AG04450 (cell line): ENCODE measurements at regions of chr12 and their contacts with region 1.

Region 1: GRCh38 chr12:83826112-83826511 is 1086.5 kb downstream of the SLC6A15 start:
- DNase-seq: no peak
- H3K4me3 ChIP-seq: no peak overlapping the region
- H3K27ac ChIP-seq: no peak overlapping the region
- H3K27me3 ChIP-seq: no peaks in the 10 kb centered on the region
- CTCF ChIP-seq: peak; percentile 77

Region 2: GRCh38 chr12:83796527-83796926 is 29.6 kb before region 1 on chr12:
- CTCF ChIA-PET with region 1: no interaction called
- POLR2A ChIA-PET with region 1: no interaction called
- DNase-seq: no peak
- H3K4me3 ChIP-seq: no peak overlapping the region
- H3K27ac ChIP-seq: no peak overlapping the region
- H3K27me3 ChIP-seq: no peaks in the 10 kb centered on the region
- CTCF ChIP-seq: no peak

Region 3: GRCh38 chr12:84397263-84397662 is 571.2 kb after region 1 on chr12:
- CTCF ChIA-PET with region 1: interaction called, 32 read pairs
- POLR2A ChIA-PET with region 1: no interaction called
- DNase-seq: no peak
- H3K4me3 ChIP-seq: no peak overlapping the region
- H3K27ac ChIP-seq: no peak overlapping the region
- H3K27me3 ChIP-seq: no peaks in the 10 kb centered on the region
- CTCF ChIP-seq: peak; percentile 37; the same call in 1 of the 2 replicates

Region 4: GRCh38 chr12:84497819-84498218 is 671.7 kb after region 1 on chr12:
- CTCF ChIA-PET with region 1: interaction called, 22 read pairs
- POLR2A ChIA-PET with region 1: no interaction called
- DNase-seq: no peak
- H3K4me3 ChIP-seq: no peak overlapping the region
- H3K27ac ChIP-seq: no peak overlapping the region
- H3K27me3 ChIP-seq: no peaks in the 10 kb centered on the region
- CTCF ChIP-seq: peak; percentile 69

Region 5: GRCh38 chr12:84502907-84503787 is 677.0 kb after region 1 on chr12:
- CTCF ChIA-PET with region 1: interaction called, 22 read pairs
- POLR2A ChIA-PET with region 1: no interaction called
- DNase-seq: peak; percentile 55
- H3K4me3 ChIP-seq: no peak overlapping the region
- H3K27ac ChIP-seq: no peak overlapping the region
- H3K27me3 ChIP-seq: no peaks in the 10 kb centered on the region
- CTCF ChIP-seq: peak; percentile 91